ENCODE measurements at regions of chr6 and their contacts with region 1.

Region 1: DNA sequence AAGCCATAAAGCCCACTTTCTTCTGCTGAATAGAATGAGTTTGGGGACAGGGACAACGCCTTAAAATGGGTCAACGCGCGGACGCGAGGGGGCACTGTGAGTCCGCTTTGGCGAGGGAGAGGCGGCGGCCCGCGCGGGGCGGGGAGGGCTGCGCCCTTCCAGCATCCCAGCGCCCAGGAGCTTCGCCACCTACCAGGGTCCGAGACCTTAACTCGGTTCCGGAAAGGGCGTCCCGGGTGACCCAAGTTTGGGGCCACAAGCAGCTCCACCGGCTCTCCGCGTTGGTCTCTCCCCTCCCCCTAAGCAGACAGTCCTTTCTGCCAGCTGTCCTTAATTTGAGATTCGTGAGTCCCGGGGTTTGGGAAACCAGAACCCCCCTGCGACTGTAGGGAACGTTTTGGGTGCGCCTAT is 1.8 kb upstream of the SAMD5 start:
- DNase-seq: no peak
- ATAC-seq: peak; percentile 56
- H3K4me3 ChIP-seq: peak overlapping the region; percentile 72 to 90
- H3K27ac ChIP-seq: no peak overlapping the region
- H3K4me1 ChIP-seq: peaks cover 5 to 29% of the 10 kb centered on the region in 2 experiments
- H3K27me3 ChIP-seq: no peaks in the 10 kb centered on the region
- CTCF ChIP-seq: peak; percentile 72 to 86 (median 82)
- POLR2A ChIP-seq: no peak
- RAD21 ChIP-seq: peak; percentile 97

Region 2: GRCh38 chr6:147390909-147391536 is 115.7 kb before region 1 on chr6:
- CTCF ChIA-PET with region 1: interaction called, 3 read pairs
- POLR2A ChIA-PET with region 1: no interaction called
- RAD21 ChIA-PET with region 1: no interaction called
- intact Hi-C with region 1: loop called (anchors 2 kb)
- DNase-seq: peak; percentile 21
- ATAC-seq: peak; percentile 63
- H3K4me3 ChIP-seq: no peak overlapping the region
- H3K27ac ChIP-seq: no peak overlapping the region
- H3K4me1 ChIP-seq: no peaks in the 10 kb centered on the region
- H3K27me3 ChIP-seq: no peaks in the 10 kb centered on the region
- CTCF ChIP-seq: peak; percentile 36 to 65 (median 56); a peak in 5 of 6 replicates
- POLR2A ChIP-seq: no peak
- RAD21 ChIP-seq: peak; percentile 81

Region 3: GRCh38 chr6:147651249-147652063 is 144.7 kb after region 1 on chr6:
- CTCF ChIA-PET with region 1: interaction called, 3 read pairs
- POLR2A ChIA-PET with region 1: no interaction called
- RAD21 ChIA-PET with region 1: no interaction called
- intact Hi-C with region 1: loop called (anchors 5 kb)
- DNase-seq: no peak
- ATAC-seq: peak; percentile 82
- H3K4me3 ChIP-seq: no peak overlapping the region
- H3K27ac ChIP-seq: no peak overlapping the region
- H3K4me1 ChIP-seq: peaks cover 0 to 7% of the 10 kb centered on the region in 2 experiments; a peak in 1 of 4 replicates
- H3K27me3 ChIP-seq: no peaks in the 10 kb centered on the region
- CTCF ChIP-seq: peak in 2 of 3 experiments; percentile 10 to 27; a peak in 2 of 6 replicates
- POLR2A ChIP-seq: no peak
- RAD21 ChIP-seq: peak; percentile 39; the same call in 1 of the 2 replicates

Region 4: DNA sequence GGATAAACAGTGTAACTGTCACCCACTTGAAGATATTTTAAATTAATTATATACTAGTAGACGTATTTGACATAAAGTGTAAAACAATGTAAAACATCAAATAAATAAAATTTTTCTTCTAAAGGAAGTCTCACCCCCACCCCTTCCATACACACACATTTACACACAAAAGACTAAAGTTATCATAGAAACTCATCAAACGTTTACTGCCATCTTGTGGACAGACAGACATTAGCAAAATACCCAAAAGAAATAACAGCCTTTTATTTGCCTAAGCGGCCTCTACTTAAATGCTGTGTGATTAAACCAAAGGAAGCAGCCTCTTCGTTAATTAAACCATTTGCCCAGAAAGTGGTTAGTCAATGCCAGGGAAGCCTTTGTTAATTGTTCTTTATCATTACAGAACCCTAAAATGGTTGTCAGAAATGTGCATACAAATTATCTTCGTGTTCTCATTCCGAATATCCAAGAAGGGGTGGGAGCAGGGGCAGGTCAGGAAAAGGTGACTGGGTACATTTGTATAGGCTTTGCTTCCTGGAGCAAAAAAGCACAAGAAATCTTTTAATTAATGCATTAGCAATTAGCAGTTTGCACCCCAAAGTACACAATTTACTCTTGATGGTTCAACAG is 659.7 kb after region 1 on chr6:
- CTCF ChIA-PET with region 1: interaction called, 20 read pairs
- POLR2A ChIA-PET with region 1: no interaction called
- RAD21 ChIA-PET with region 1: no interaction called
- intact Hi-C with region 1: loop called (anchors 1 kb)
- DNase-seq: peak; percentile 51
- ATAC-seq: peak; percentile 72
- H3K4me3 ChIP-seq: no peak overlapping the region
- H3K27ac ChIP-seq: no peak overlapping the region
- H3K4me1 ChIP-seq: no peaks in the 10 kb centered on the region
- H3K27me3 ChIP-seq: no peaks in the 10 kb centered on the region
- CTCF ChIP-seq: peak; percentile 52 to 79 (median 70)
- POLR2A ChIP-seq: no peak
- RAD21 ChIP-seq: peak; percentile 88

Region 5: DNA sequence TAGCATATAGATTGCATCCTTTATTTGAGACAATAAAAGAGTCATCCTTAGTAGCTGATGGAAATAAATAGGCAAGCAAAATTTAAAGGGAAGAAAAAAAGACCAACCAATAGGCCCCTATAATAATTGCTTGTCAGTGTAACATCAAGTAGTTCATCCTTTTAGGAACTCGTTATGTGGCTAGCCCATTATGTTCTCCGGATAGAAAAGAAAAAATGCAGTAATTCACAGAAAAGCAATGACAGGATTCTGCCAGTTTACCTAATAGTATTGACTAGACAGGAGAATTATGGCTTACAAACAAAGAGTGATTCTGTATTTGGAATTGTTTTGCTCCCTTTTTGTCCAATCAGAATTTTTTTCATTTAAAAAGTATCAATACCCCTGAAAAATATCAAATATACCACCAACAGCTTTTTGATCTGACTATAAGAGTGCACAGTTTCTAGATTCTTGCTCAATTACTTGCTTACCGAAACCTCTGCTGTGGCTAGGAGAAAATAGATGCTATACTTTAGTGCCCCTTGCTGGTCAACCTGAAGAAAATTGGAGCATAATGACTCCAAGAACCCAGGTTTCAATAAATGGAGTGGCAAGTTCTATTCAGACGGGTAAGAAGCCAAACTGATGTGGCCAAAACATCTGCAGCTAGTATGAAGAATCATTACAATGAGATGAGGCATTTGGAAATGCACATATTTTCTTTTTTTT is 744.4 kb after region 1 on chr6:
- CTCF ChIA-PET with region 1: no interaction called
- POLR2A ChIA-PET with region 1: no interaction called
- RAD21 ChIA-PET with region 1: no interaction called
- intact Hi-C with region 1: loop called (anchors 2 kb)
- DNase-seq: no peak
- ATAC-seq: peak; percentile 49; the same call in 1 of the 2 replicates
- H3K4me3 ChIP-seq: no peak overlapping the region
- H3K27ac ChIP-seq: no peak overlapping the region
- H3K4me1 ChIP-seq: no peaks in the 10 kb centered on the region
- H3K27me3 ChIP-seq: no peaks in the 10 kb centered on the region
- CTCF ChIP-seq: peak in 2 of 3 experiments; percentile 42 to 49; a peak in 2 of 6 replicates
- POLR2A ChIP-seq: no peak
- RAD21 ChIP-seq: peak; percentile 69

Measured in HCT116 (cell line).